Posterior vena cava (tissue), 2 donors: ENCODE measurements at regions of chr5 and their contacts with region 1.

Region 1: DNA sequence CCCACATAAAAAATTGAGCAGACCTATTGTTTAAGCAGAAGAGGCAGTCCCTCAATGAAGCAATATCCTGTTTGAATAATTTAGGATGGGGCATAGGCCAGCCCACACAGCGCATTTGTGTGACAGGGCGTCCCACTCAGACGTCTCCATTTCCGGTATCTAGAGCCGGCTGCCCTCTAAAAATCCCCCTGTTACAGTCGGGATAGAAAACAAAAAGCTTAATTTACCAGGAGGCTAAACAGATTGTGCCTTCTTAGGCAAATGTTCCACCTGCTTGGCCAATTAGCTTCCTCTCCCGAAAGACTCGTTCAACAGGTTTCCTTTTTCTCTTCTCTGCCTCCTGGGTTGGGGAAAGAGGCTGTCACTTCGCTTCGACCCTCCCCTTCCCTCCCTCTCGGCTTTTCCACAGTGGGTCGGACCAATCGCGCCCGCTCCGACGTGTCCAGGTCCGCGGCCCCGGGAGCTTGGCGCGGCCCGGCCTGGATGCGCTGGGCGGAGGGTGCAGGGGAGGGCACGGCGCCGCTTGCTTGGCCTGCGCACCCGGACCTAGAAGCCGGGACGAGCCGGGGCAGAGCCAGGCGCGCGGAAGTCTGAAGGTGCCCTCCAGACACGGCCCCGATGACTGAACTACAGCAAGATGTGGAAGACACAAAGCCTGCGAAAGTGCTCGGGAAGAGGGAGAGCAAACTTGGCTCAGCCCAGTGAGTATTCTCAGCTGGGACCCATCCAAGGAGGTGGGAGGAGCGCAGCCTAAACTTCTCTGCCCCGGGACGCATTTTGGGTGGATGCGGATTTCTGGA is at the start of gene GRAMD2B:
- DNase-seq: peak; percentile 94
- total RNA-seq, gene GRAMD2B: 20.9 to 21.0 TPM

Region 2: DNA sequence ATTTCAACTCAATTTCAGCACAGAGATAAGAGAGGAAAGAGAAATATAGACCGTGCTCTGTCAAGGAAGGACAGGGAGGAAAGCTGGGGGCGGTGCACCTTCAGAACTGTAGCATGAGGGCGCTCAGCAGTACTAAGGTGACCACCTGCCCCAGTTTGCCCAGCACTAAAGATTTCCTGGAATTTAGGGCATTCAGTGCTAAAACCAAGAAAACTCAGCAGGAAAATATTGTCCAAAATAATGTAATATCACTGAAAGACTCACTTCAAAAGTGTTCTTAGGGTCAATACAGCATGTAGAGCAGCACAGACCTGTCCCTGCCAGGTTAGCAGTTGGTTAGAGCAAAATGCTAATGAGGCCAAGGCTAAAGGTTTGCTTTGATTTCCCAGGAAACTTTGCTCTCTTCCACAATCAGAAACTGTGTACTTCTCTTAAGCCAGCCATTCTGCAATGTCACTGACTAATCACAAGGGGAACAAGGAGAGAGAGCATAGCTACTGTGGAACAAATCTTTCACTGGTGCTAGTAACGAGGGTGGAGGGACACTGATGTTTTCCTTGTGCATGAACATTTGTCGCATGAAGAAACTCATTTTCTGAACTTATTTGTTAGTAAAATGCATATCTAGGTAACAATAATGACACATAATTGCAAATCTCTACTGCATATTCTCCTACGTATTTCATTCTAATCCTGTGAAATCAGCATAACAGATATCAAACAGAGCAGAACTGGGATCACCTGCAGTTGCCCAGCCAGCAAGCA is 53.0 kb before region 1 on chr5:
- intact Hi-C with region 1: loop called in 1 of 2 experiments (anchors 10 kb)
- DNase-seq: no peak

Region 3: GRCh38 chr5:126471875-126472537 is 48.8 kb after region 1 on chr5:
- intact Hi-C with region 1: loop called in 1 of 2 experiments (anchors 10 kb)
- DNase-seq: no peak

Region 4: DNA sequence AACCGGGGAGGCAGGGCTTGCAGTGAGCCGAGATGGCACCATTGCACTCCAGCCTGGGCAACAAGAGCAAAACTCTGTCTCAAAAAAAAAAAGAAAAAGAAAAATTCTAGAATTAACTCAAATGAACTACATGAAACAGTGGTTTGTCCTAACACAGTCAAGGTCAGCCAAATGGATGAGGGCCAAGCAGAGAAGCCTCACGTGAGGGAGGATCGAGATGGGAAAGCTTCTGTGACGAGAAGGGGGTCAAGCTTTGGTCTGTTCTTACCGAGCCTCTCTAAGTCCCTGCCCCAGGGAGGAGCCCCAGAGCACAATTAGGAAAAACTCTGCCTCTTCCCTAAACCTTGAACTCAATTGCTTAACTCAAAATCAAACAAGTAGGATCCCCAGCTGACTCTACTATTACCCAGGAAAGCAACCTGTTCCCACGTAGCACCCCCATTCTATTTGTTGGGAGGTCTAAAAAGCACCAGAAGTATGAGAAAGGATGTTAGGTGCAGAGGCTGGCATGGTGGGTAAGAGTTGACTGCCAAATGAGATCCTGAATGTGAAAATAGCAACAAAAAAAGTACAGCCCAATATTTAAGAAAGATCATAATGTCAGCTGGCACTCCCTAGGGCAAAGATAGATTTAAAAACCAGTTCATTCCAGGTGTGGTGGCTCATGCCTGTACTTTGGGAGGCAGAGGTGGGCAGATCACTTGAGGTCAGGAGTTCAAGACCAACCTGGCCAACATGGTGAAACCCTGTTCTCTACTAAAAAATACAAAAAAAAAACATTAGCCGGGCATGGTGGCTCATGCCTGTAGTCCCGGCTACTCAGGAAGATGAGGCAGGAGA is 164.6 kb after region 1 on chr5:
- intact Hi-C with region 1: no loop called
- DNase-seq: no peak